Heart right ventricle (tissue), 16 donors: ENCODE measurements at regions of chr3 and their contacts with region 1.

Region 1: GRCh38 chr3:50299929-50300685 is 902 bp upstream of the HYAL3 start:
- DNase-seq: no peak
- ATAC-seq: no peak
- H3K4me3 ChIP-seq: peak overlapping the region; percentile 16 to 82 (median 57)
- H3K27ac ChIP-seq: peak overlapping the region; percentile 66 to 95 (median 94)
- H3K4me1 ChIP-seq: peaks cover 22 to 59% (median 52%) of the 10 kb centered on the region in 9 donors
- H3K27me3 ChIP-seq: no peaks in the 10 kb centered on the region
- CTCF ChIP-seq: no peak

Region 2: GRCh38 chr3:50154450-50154839 is 145.7 kb before region 1 on chr3:
- intact Hi-C with region 1: no loop called
- DNase-seq: no peak
- ATAC-seq: peak in 7 of 8 donors; percentile 27 to 65 (median 32)
- H3K4me3 ChIP-seq: peak overlapping the region; percentile 14 to 67 (median 60)
- H3K27ac ChIP-seq: peak overlapping the region in 3 of 10 donors; percentile 74 to 88 (median 81)
- H3K4me1 ChIP-seq: peaks cover 5 to 40% (median 24%) of the 10 kb centered on the region in 9 donors
- H3K27me3 ChIP-seq: peaks cover 0 to 41% (median 0%) of the 10 kb centered on the region in 7 donors
- CTCF ChIP-seq: peak in 7 of 9 donors; percentile 9 to 54 (median 25)

Region 3: GRCh38 chr3:50337191-50337841 is 37.2 kb after region 1 on chr3:
- intact Hi-C with region 1: loop called in 1 of 10 experiments (anchors 5 kb)
- DNase-seq: peak; percentile 100
- ATAC-seq: peak; percentile 83 to 92 (median 86)
- H3K4me3 ChIP-seq: peak overlapping the region; percentile 61 to 99 (median 78)
- H3K27ac ChIP-seq: peak overlapping the region; percentile 88 to 100 (median 97)
- H3K4me1 ChIP-seq: peaks cover 15 to 87% (median 76%) of the 10 kb centered on the region in 9 donors
- H3K27me3 ChIP-seq: no peaks in the 10 kb centered on the region
- CTCF ChIP-seq: no peak